ENCODE measurements at regions of chr11 and their contacts with region 1.

Region 1: DNA sequence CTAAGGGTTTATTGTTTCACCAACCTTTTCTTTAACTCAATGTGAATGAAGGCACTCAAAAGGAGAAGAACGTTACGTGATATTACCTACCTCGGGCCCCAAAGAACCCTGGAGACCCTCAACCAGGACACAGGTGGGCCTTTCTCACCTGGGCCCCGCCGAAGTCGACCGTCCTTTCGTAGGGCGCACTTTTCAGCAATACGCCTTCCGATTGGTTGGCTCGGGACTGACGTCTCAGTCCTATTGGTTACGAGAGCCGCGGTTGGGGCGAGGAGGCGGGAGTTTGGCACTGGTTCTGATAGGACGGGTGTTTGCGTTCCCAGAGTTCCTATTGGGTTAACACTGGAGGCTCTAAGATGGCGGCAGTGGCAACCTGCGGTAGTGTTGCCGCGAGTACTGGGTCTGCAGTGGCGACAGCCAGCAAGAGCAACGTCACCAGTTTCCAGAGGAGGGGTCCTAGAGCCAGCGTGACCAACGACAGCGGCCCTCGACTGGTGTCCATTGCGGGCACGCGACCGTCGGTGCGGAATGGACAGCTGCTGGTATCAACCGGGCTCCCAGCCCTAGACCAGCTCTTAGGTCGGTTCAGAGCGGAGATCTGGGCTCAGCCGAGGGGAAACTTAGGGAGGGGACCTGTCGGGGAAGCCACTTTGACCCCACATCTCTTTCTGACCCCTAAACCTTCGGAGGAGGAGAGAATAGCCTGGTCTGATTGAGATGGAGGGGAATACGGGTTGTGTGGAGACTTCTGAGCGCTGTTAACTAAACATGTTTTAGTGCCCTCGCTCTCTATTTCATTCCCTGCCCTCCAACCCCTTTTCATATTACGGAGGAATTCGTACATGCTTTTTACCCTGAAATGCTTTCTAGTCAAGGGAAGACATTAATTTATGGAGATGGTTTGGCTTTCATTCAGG is at the starts of genes ELP4 and IMMP1L:
- DNase-seq: peak; percentile 97
- ATAC-seq: peak; percentile 99 to 100
- H3K4me3 ChIP-seq: peak within 1 kb of the TSS; percentile 89 to 98 (median 97)
- H3K27ac ChIP-seq: peak within 1 kb of the TSS; percentile 80 to 90 (median 90)
- H3K4me1 ChIP-seq: peaks cover 17 to 26% of the 10 kb centered on the region in 2 donors
- H3K27me3 ChIP-seq: no peaks in the 10 kb centered on the region
- CTCF ChIP-seq: no peak
- POLR2A ChIP-seq: peak; percentile 45 to 49
- total RNA-seq, gene ELP4: 8.8 to 23.6 (median 13.5) TPM
- total RNA-seq, gene IMMP1L: 14.2 to 30.6 (median 23.7) TPM

Region 2: DNA sequence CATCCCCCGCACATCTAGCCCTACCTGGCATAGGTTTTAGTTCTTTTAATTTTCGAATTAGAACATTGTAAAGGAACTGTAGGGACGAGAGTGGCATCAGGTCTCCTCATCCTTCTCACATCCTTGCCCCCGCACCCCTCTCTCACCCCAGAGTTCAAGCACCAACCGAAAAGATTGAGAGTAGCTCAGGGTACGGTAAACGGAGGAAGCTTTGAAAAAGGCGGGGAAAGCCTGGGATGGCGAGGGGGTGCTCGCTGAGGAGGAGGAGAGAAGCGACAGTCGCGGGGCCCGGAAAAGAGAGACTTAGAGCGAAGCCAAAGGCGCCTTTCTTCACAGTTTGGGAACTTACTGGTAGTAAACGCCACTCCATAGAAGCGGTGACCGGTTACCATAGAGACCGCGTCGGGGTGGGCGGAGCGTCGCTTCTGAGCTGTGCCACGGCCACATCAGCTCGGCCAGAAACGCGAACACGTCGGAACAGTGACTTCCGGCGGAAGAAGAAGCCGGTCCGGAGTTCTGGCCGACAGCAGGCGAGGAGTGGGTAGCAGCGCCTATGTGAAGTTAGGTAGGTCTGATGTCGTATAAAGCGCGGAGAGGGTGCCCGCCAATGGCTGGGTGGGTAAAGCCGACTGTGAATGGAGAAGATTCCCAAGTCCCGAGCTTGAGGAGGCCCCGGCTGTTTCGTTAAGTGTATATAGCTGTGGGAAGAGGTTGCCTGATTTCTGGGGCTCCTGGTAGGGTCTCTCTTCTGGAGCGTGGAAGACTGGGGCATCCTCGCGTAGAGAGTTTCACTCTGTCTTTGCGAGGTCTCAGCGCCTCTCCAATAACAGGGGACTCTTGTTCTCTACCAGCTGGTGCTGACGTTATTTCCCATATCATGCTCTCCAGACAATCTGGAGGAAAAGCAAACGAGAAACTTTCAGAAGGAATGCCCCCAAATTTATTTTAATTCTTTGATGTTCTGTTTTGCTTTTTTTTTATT is 140.0 kb before region 1 on chr11 and contains the starts of genes DCDC1 and DNAJC24:
- in situ Hi-C with region 1: no loop called
- intact Hi-C with region 1: loop called (anchors 2 kb)
- DNase-seq: peak; percentile 81 to 83
- ATAC-seq: peak; percentile 98 to 99
- H3K4me3 ChIP-seq: peak within 1 kb of the TSS; percentile 76 to 95 (median 90)
- H3K27ac ChIP-seq: peak within 1 kb of the TSS; percentile 67 to 85 (median 82)
- H3K4me1 ChIP-seq: peaks cover 14 to 19% of the 10 kb centered on the region in 2 donors
- H3K27me3 ChIP-seq: no peaks in the 10 kb centered on the region
- CTCF ChIP-seq: no peak
- POLR2A ChIP-seq: peak; percentile 37 to 53
- total RNA-seq, gene DCDC1: not detected
- total RNA-seq, gene DNAJC24: 13.1 to 20.1 (median 16.6) TPM

Region 3: GRCh38 chr11:31810779-31811647 is 301.3 kb after region 1 on chr11 and contains the start of gene PAX6:
- in situ Hi-C with region 1: no loop called
- intact Hi-C with region 1: loop called (anchors 10 kb)
- DNase-seq: peak in 1 of 2 donors; percentile 16
- ATAC-seq: no peak
- H3K4me3 ChIP-seq: peak within 1 kb of the TSS; percentile 42 to 68 (median 53)
- H3K27ac ChIP-seq: no peak within 1 kb of the TSS
- H3K4me1 ChIP-seq: peaks cover 56 to 65% of the 10 kb centered on the region in 2 donors
- H3K27me3 ChIP-seq: peaks cover 97 to 100% (median 100%) of the 10 kb centered on the region in 3 donors
- CTCF ChIP-seq: no peak
- POLR2A ChIP-seq: no peak
- total RNA-seq, gene PAX6: not detected

Region 4: DNA sequence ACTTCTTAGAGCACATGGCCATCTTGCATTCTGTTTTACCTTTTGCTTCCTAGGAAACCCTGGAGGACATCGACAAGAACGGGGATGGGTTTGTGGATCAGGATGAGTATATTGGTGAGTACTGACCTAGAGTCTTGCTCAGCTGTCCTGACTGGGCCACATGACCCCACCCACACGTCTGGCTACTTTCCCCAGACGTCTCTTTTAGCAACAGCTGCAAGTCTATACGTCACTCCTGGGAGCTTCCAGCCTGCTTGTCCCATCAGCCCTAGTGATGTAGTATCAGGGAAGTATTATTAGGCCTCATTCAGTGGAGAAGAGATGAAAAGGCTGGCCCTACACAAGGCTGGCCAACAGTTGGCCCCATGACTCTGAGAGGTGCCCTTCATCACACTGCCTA is 590.8 kb after region 1 on chr11:
- in situ Hi-C with region 1: no loop called
- intact Hi-C with region 1: loop called (anchors 5 kb)
- DNase-seq: peak in 1 of 2 donors; percentile 17
- ATAC-seq: peak in 1 of 2 donors; percentile 30
- H3K4me3 ChIP-seq: no peak overlapping the region
- H3K27ac ChIP-seq: no peak overlapping the region
- H3K4me1 ChIP-seq: peaks cover 0 to 5% of the 10 kb centered on the region in 2 donors
- H3K27me3 ChIP-seq: no peaks in the 10 kb centered on the region
- CTCF ChIP-seq: no peak
- POLR2A ChIP-seq: no peak